Posterior cingulate gyrus (tissue), 11 donors: ENCODE measurements at regions of chr1 and their contacts with region 1.

Region 1: DNA sequence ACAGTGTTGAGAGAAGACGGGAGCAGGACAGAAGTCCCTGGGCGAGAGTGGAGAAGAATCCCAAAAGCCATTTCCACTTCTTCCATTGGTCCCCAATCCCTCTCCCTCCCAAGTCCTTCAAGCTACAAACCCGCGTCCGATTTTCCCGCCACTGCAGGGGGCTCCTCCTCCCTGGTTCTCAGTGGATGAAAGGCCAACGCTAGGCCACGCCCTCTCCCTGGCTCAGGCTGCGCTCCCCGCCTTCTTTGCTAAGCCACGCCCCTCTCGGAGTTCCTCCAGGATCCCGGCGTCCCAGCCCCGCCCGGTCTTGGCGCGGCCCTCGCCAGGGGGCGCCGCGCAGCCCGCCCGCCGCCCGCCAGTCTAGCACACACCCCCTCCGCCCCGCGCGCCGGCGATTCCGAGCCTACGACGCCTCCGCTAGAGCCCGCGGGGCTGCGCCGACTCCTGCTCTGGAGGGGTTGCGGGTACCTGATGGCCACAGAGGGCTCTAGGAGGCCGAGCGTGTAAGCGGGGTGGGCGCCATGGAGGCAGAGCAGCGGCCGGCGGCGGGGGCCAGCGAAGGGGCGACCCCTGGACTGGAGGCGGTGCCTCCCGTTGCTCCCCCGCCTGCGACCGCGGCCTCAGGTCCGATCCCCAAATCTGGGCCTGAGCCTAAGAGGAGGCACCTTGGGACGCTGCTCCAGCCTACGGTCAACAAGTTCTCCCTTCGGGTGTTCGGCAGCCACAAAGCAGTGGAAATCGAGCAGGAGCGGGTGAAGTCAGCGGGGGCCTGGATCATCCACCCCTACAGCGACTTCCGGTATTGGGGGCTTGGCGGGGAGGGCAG is at the start of gene HCN3:
- DNase-seq: peak; percentile 96 to 100 (median 98)

Region 2: GRCh38 chr1:155261852-155262673 is 15.2 kb before region 1 on chr1 and contains the start of gene SCAMP3:
- intact Hi-C with region 1: loop called (anchors 1 kb)
- DNase-seq: peak; percentile 94 to 99 (median 96)

Region 3: GRCh38 chr1:155777582-155777981 is 500.3 kb after region 1 on chr1:
- intact Hi-C with region 1: no loop called
- DNase-seq: no peak